ENCODE measurements at regions of chr13 and their contacts with region 1.

Region 1: GRCh38 chr13:33723772-33724435 is 94.0 kb upstream of the RFC3 start:
- DNase-seq: peak; percentile 79
- ATAC-seq: peak; percentile 86
- H3K4me3 Mint-ChIP-seq: no peak overlapping the region
- H3K27ac Mint-ChIP-seq: peak overlapping the region; percentile 20
- H3K4me1 Mint-ChIP-seq: peaks cover 21% of the 10 kb centered on the region
- H3K27me3 Mint-ChIP-seq: no peaks in the 10 kb centered on the region
- CTCF ChIP-seq: peak; percentile 71

Region 2: GRCh38 chr13:33228648-33229445 is 495.1 kb before region 1 on chr13:
- CTCF ChIA-PET with region 1: interaction called, 8 read pairs
- POLR2A ChIA-PET with region 1: no interaction called
- intact Hi-C with region 1: loop called (anchors 5 kb)
- DNase-seq: no peak
- ATAC-seq: peak; percentile 83
- H3K4me3 Mint-ChIP-seq: no peak overlapping the region
- H3K27ac Mint-ChIP-seq: no peak overlapping the region
- H3K4me1 Mint-ChIP-seq: peaks cover 3% of the 10 kb centered on the region
- H3K27me3 Mint-ChIP-seq: peaks cover 3% of the 10 kb centered on the region
- CTCF ChIP-seq: peak; percentile 95

Region 3: DNA sequence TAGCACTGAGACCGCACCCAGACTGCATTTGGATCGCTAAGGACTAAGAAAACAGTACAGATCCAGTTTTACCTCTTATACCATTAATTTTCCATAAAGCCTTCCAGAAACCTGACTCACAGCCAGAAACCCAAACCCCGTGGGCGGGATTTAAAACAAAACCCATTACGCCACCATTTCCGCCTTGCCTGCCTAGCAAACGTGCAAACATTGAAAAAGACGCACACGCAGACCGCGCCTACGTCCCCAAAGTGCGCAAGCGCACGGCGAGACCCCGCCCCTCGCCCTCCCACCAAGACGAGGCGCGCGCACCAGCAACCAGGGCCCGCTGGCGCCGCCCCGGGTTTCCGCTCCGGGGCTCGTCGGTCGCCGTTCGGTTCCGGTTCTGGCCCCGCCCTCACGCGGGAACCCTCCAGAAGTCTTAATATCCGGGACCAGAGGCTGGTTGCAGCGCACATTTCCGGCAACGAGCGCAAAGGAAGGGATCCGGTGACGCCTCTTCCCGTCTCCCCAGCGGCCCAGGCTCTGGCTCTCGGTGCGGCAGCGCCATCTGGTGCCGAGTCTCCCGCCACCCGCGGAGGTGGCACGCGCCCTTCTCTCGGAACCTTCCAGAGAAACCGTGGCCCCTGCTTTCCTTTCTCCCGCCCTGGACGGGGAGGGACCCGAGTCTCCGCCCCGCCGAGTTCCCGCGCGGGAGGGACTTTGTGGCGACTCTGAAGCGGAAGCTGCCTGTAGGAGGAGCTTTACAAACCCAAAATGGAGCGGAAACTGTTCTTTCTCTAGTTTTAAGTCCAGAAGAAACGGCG is 181.4 kb before region 1 on chr13:
- CTCF ChIA-PET with region 1: interaction called, 60 read pairs
- POLR2A ChIA-PET with region 1: no interaction called
- intact Hi-C with region 1: loop called (anchors 2 kb)
- DNase-seq: peak; percentile 98
- ATAC-seq: peak; percentile 85
- H3K4me3 Mint-ChIP-seq: peak overlapping the region; percentile 81
- H3K27ac Mint-ChIP-seq: peak overlapping the region; percentile 99
- H3K4me1 Mint-ChIP-seq: peaks cover 51% of the 10 kb centered on the region
- H3K27me3 Mint-ChIP-seq: no peaks in the 10 kb centered on the region
- CTCF ChIP-seq: peak; percentile 74

Region 4: GRCh38 chr13:33554919-33555791 is 168.7 kb before region 1 on chr13:
- CTCF ChIA-PET with region 1: no interaction called
- POLR2A ChIA-PET with region 1: no interaction called
- intact Hi-C with region 1: loop called (anchors 5 kb)
- DNase-seq: no peak
- ATAC-seq: peak; percentile 42
- H3K4me3 Mint-ChIP-seq: no peak overlapping the region
- H3K27ac Mint-ChIP-seq: no peak overlapping the region
- H3K4me1 Mint-ChIP-seq: peaks cover 6% of the 10 kb centered on the region
- H3K27me3 Mint-ChIP-seq: peaks cover 5% of the 10 kb centered on the region
- CTCF ChIP-seq: no peak

Region 5: GRCh38 chr13:33610471-33611015 is 113.4 kb before region 1 on chr13:
- CTCF ChIA-PET with region 1: interaction called, 3 read pairs
- POLR2A ChIA-PET with region 1: no interaction called
- intact Hi-C with region 1: loop called (anchors 5 kb)
- DNase-seq: peak; percentile 73
- ATAC-seq: peak; percentile 61
- H3K4me3 Mint-ChIP-seq: peak overlapping the region; percentile 67
- H3K27ac Mint-ChIP-seq: peak overlapping the region; percentile 85
- H3K4me1 Mint-ChIP-seq: peaks cover 34% of the 10 kb centered on the region
- H3K27me3 Mint-ChIP-seq: peaks cover 7% of the 10 kb centered on the region
- CTCF ChIP-seq: no peak

Region 6: GRCh38 chr13:33678906-33679657 is 44.8 kb before region 1 on chr13:
- CTCF ChIA-PET with region 1: interaction called, 13 read pairs
- POLR2A ChIA-PET with region 1: no interaction called
- intact Hi-C with region 1: no loop called
- DNase-seq: peak; percentile 87
- ATAC-seq: peak; percentile 92
- H3K4me3 Mint-ChIP-seq: peak overlapping the region; percentile 69
- H3K27ac Mint-ChIP-seq: peak overlapping the region; percentile 85
- H3K4me1 Mint-ChIP-seq: peaks cover 20% of the 10 kb centered on the region
- H3K27me3 Mint-ChIP-seq: peaks cover 13% of the 10 kb centered on the region
- CTCF ChIP-seq: no peak

Region 7: GRCh38 chr13:33711436-33711835 is 12.5 kb before region 1 on chr13:
- CTCF ChIA-PET with region 1: interaction called, 11 read pairs
- POLR2A ChIA-PET with region 1: no interaction called
- intact Hi-C with region 1: no loop called
- DNase-seq: no peak
- ATAC-seq: no peak
- H3K4me3 Mint-ChIP-seq: no peak overlapping the region
- H3K27ac Mint-ChIP-seq: no peak overlapping the region
- H3K4me1 Mint-ChIP-seq: no peaks in the 10 kb centered on the region
- H3K27me3 Mint-ChIP-seq: peaks cover 7% of the 10 kb centered on the region
- CTCF ChIP-seq: no peak

Measured in activated CD8-positive, alpha-beta T cell treated with anti-CD3 and anti-CD28 coated beads for 36 hours (primary cell).